ENCODE measurements at regions of chr1 and their contacts with region 1.

Region 1: DNA sequence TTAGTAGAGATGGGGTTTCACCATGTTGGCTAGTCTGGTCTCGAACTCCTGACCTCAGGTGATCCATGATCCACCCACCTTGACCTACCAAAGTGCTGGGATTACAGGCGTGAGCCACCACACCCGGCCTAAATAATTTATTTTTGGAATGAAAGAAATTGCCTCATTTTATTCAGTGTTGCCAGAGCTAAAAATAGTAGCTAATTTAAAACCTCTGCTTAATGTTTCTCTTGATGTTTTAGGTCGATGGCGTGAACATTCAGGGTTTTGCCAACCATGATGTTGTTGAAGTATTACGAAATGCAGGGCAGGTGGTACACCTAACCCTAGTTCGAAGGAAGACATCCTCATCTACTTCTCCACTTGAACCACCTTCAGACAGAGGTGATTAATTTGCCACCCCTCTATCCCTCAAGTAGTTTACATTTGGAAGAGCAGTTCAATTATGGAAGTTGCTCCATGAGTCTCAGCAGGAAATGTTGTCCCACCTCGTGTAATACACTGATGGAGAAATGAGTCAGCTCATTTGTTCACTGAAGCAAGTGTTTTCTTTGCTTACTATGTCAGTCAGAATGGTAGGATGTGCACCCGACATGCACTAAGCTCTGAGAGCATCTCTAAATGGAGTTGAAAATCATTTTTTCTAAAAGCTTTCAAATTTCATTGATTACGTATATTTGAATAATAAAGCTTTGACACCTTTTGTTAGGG is 54.9 kb downstream of the PATJ start:
- DNase-seq: no peak
- H3K4me3 ChIP-seq: no peak overlapping the region
- H3K27ac ChIP-seq: no peak overlapping the region
- H3K27me3 ChIP-seq: no peaks in the 10 kb centered on the region
- CTCF ChIP-seq: no peak

Region 2: DNA sequence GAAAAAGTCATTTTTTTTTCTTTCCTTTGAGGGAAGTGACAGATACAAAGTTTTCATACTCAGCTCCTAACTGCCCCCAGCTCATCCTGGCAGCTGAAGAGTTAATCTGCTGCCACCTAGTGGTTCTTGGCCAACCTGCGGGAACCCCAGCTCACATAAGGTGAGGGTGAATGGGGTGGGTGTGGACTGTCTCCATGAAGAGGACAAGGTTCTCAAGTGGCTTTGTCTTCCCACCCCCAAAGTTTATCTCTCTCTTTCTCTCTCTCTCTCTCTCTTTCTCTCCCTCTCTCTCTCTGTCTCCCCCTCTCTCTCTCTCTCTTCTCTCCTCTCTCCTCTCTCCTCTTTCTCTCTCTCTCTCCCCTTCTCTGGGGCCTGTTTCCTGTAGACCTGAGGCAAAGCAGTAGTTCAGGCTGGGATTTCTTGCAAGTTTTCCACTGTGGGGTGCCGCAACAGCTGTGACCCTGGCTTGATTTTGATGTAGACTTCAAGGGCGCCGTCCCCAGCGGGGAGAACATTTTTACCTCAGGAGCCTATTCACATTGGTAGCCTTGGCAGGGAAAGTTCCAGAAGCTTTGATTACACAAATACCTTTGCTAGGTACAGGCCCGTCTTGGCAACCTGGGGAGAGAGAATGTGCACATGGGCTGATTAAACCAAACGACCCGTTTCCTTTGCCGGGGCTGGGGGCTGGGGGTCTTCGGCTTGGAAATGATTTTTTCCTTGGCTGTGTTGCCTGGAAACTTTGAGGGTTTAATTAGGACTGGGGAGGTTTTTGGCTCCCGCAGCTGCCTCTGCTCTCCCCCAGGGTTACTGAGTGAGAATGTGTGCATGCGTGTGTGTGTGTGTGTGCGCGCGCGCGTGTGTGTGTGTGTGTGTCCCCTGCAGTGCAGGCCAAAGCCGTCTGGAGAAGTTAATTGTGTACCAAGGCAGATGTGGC is 208.2 kb before region 1 on chr1:
- CTCF ChIA-PET with region 1: no interaction called
- POLR2A ChIA-PET with region 1: interaction called, 11 read pairs
- DNase-seq: peak; percentile 6
- H3K4me3 ChIP-seq: no peak overlapping the region
- H3K27ac ChIP-seq: no peak overlapping the region
- H3K27me3 ChIP-seq: peaks cover 2% of the 10 kb centered on the region
- CTCF ChIP-seq: peak; percentile 83

Region 3: GRCh38 chr1:61782771-61783170 is 14.4 kb before region 1 on chr1:
- CTCF ChIA-PET with region 1: no interaction called
- POLR2A ChIA-PET with region 1: no interaction called
- DNase-seq: no peak
- H3K4me3 ChIP-seq: no peak overlapping the region
- H3K27ac ChIP-seq: no peak overlapping the region
- H3K27me3 ChIP-seq: no peaks in the 10 kb centered on the region
- CTCF ChIP-seq: no peak

Region 4: DNA sequence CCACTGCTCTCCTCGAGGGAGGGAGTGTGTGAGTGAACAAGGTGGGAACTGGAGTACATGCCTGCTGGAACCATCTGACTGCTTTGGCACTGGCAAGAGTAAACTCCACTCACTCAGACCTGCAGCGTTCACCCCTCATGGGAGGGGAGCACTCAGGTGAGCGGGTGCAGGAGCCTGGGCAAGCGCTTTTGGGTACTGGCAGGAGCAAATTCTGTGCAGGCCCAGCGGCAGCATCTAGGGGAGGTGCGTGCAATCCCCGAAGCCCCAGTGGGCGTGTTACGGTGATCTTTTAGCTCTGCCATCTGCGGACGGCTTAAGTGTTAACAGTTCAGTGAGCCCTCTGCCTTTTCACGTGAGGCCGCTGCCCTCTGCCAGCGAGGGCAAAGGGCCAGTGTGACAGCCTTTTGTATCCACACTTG is 72.5 kb after region 1 on chr1:
- CTCF ChIA-PET with region 1: no interaction called
- POLR2A ChIA-PET with region 1: no interaction called
- DNase-seq: no peak
- H3K4me3 ChIP-seq: no peak overlapping the region
- H3K27ac ChIP-seq: no peak overlapping the region
- H3K27me3 ChIP-seq: no peaks in the 10 kb centered on the region
- CTCF ChIP-seq: no peak

Measured in AG04450 (cell line).